Aorta (tissue), 5 donors: ENCODE measurements at regions of chr4 and their contacts with region 1.

Region 1: GRCh38 chr4:13484122-13484748 is at the start of gene RAB28:
- DNase-seq: peak; percentile 96 to 98
- ATAC-seq: peak; percentile 100
- H3K4me3 ChIP-seq: peak within 1 kb of the TSS; percentile 88 to 90
- H3K27ac ChIP-seq: peak within 1 kb of the TSS; percentile 38 to 87
- H3K4me1 ChIP-seq: peaks cover 0 to 3% of the 10 kb centered on the region in 2 donors
- H3K27me3 ChIP-seq: no peaks in the 10 kb centered on the region
- total RNA-seq, gene RAB28: 14.7 to 16.5 TPM

Region 2: DNA sequence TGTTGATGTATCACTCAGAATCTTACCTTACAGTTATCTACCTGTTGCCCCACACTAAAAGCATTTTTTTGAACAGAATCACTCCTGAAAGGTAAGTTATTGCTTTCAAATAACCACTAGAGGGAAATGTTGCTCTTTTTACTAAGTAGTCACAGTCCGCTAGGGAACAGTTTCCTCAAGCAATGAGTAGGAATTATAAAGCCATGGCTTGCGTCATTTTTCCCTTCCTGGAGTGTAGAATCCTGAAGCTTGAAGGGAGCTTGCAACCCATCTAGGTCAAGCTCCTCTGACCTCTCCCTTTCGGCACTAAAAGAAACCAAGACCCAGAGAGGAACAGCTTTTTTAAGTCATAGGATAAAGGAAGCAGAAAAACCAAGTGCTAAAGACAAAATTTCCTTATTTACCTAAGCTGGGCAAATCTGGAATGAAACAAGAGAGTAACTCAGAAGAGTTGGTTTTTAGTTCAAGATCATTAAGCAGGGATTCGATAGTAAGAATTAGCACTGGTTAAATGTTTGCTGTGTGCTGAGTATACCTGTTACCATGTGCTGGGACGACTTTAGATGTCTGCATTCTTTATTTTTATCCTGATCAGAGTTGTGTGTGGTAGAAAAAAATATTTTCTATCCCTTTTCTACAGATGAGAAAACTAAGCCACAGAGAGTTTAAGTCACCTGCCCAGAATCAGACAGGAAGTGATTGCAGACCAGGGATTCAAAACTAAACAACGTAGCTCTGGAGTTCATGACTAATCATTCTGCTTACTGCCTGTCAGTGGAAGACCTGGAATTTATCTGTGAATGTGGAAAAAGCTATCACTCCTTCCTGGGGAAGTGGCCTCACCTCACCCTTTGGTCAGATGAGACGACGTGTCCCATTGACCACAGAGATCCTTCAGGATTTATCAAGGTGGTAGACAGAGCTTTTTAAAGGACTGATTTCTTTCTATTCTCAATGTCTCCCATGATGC is 631.6 kb before region 1 on chr4:
- intact Hi-C with region 1: loop called in 1 of 2 experiments (anchors 5 kb)
- DNase-seq: no peak
- ATAC-seq: peak; percentile 84
- H3K4me3 ChIP-seq: no peak overlapping the region
- H3K27ac ChIP-seq: no peak overlapping the region
- H3K4me1 ChIP-seq: peaks cover 0 to 3% of the 10 kb centered on the region in 2 donors
- H3K27me3 ChIP-seq: peaks cover 0 to 2% of the 10 kb centered on the region in 2 donors

Region 3: GRCh38 chr4:13441506-13441905 is 42.7 kb before region 1 on chr4:
- intact Hi-C with region 1: no loop called
- DNase-seq: no peak
- ATAC-seq: no peak
- H3K4me3 ChIP-seq: no peak overlapping the region
- H3K27ac ChIP-seq: no peak overlapping the region
- H3K4me1 ChIP-seq: no peaks in the 10 kb centered on the region
- H3K27me3 ChIP-seq: no peaks in the 10 kb centered on the region

Region 4: DNA sequence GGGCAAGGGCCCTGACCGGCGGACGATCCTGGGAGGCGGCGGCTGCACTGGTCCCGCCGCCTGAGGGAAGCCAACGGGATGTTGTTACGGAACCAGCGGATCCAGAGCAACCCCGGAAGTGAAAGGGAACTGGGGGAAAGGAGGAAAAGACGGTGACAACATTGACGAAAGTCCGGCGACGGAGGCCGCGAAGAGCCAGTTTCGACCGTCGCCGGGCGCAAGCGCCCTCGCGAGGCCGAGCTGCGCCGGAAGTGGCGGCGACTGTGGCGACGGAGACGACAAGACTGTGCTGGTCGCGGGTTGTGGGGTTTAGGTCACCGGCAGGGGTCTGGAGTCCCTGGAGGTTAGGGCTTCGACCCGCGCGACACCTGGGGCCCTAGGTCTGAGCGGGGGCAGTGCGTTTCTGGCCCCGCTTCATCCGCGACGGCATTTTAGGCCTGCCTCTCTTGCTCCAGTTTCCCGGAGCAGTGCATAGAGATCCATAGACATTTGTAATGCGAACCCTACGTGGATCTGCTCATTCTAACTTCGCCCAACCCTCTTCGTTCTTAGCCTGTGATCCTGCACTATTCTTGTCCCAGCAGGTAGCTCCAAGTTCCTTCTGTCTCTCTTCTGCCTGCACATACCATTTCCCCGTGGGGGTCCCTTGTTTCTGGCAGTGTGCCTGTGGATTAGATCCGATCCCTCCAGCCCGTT is 143.5 kb after region 1 on chr4 and contains the start of gene BOD1L1:
- intact Hi-C with region 1: loop called in 1 of 2 experiments (anchors 10 kb)
- DNase-seq: peak; percentile 95 to 96
- ATAC-seq: peak; percentile 98
- H3K4me3 ChIP-seq: peak within 1 kb of the TSS; percentile 76 to 79
- H3K27ac ChIP-seq: peak within 1 kb of the TSS; percentile 87 to 93
- H3K4me1 ChIP-seq: peaks cover 0 to 4% of the 10 kb centered on the region in 2 donors
- H3K27me3 ChIP-seq: no peaks in the 10 kb centered on the region
- total RNA-seq, gene BOD1L1: 42.5 to 52.6 TPM